PC-9 (cell line): ENCODE measurements at regions of chr13 and their contacts with region 1.

Region 1: DNA sequence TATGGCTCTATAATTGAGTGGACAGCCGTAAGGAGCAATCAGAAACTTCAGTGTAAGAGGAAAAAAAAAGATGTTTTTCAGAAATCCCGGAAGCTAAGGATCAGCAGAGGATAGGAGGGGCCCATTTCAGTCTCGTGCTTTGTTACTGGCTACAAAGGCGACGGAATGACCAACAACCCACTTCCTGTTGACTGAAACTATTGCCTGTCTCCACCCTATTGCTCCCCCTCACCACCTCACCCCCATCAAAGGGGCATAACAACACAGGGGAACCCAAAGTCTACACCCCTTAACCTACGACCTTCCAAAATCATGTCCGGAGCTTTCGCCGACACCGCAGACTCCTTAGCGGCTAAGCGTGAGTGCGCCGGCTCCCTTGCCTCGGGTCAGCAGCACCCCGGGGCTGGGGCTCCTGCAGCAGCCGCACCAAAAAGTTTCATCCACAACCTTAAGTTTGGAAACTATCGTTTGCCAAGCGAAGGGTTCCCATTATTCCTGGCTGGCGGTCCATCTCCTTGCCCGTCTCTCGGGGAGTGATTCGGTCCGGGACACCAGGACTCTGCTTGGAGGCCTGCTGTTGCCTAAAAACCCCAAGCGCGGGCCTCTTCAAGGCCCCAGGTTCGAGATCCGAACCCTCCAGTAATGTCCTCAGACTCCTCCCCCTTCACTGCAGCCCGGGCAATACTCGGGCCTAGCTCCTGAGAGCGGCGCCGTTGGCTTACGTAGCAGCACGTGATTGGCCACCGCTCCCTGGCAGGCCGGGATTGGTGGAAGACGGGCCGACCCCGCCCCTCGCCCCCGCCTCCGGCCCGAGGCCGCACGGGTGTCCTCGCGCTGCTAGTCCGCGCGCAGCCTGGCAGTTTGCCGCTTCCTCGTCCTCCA is at the start of gene TPP2:
- DNase-seq: peak; percentile 96 to 99
- H3K4me3 ChIP-seq: peak within 1 kb of the TSS; percentile 93
- H3K27ac ChIP-seq: peak within 1 kb of the TSS; percentile 95
- H3K4me1 ChIP-seq: peaks cover 35% of the 10 kb centered on the region
- H3K27me3 ChIP-seq: no peaks in the 10 kb centered on the region
- CTCF ChIP-seq: no peak
- total RNA-seq, gene TPP2: 33.3 and 35.1 TPM in 2 replicates

Region 2: GRCh38 chr13:102510072-102510471 is 86.3 kb before region 1 on chr13:
- CTCF ChIA-PET with region 1: no interaction called
- POLR2A ChIA-PET with region 1: no interaction called
- intact Hi-C with region 1: no loop called
- DNase-seq: no peak
- H3K4me3 ChIP-seq: no peak overlapping the region
- H3K27ac ChIP-seq: no peak overlapping the region
- H3K4me1 ChIP-seq: no peaks in the 10 kb centered on the region
- H3K27me3 ChIP-seq: no peaks in the 10 kb centered on the region
- CTCF ChIP-seq: no peak

Region 3: GRCh38 chr13:102571075-102571474 is 25.3 kb before region 1 on chr13:
- CTCF ChIA-PET with region 1: no interaction called
- POLR2A ChIA-PET with region 1: no interaction called
- intact Hi-C with region 1: no loop called
- DNase-seq: no peak
- H3K4me3 ChIP-seq: no peak overlapping the region
- H3K27ac ChIP-seq: no peak overlapping the region
- H3K4me1 ChIP-seq: no peaks in the 10 kb centered on the region
- H3K27me3 ChIP-seq: peaks cover 83% of the 10 kb centered on the region
- CTCF ChIP-seq: peak; percentile 44

Region 4: DNA sequence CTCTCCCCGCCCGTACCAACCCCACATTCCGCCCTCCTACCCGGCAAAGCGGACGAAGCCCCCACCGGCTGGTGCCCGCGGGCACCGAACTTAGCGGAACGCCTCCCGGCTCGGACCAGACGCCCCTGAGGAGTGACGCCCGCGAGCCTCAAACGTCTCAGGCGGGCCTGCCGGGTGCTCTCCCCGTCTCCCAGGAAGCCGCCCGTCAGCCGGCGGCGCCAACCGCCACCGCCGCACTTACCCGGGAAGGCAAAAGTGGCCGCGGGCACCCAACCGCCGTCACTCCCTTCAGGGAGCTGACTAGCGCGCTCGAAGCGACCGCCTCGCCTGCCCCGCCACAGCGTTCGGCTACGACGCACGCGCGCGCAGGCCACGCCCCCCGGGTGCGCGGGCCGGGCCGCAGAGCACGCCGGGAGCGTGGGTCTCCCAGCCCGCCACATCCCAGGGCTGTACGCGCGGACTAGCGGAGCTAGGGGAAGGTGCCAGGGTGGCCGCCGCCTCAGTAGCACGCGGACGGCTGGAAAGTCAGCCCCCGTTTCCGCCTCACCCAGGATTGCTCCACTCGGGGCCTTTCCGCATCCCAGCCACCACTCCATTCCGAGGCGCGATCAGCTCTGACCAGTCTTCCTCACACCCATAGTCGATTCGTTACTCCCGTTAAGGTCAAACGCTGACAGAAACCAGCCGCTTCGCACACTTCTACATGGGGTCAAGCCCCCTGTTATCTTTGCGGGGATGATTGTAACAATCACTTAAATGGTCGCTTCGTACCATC is 177.2 kb after region 1 on chr13 and contains the start of gene TEX30:
- CTCF ChIA-PET with region 1: no interaction called
- POLR2A ChIA-PET with region 1: interaction called, 5 read pairs
- intact Hi-C with region 1: loop called (anchors 5 kb)
- DNase-seq: peak; percentile 64 to 88
- H3K4me3 ChIP-seq: peak within 1 kb of the TSS; percentile 84
- H3K27ac ChIP-seq: 0 out of 2 replicates have a peak within 1 kb of the TSS, but pooled peaks have one; percentile 4
- H3K4me1 ChIP-seq: peaks cover 11% of the 10 kb centered on the region
- H3K27me3 ChIP-seq: no peaks in the 10 kb centered on the region
- CTCF ChIP-seq: no peak
- total RNA-seq, gene TEX30: 9.3 and 13.1 TPM in 2 replicates

Region 5: GRCh38 chr13:102793583-102794355 is 197.4 kb after region 1 on chr13:
- CTCF ChIA-PET with region 1: no interaction called
- POLR2A ChIA-PET with region 1: no interaction called
- intact Hi-C with region 1: no loop called
- DNase-seq: no peak
- H3K4me3 ChIP-seq: no peak overlapping the region
- H3K27ac ChIP-seq: no peak overlapping the region
- H3K4me1 ChIP-seq: peaks cover 9% of the 10 kb centered on the region; the same call in 1 of the 2 replicates
- H3K27me3 ChIP-seq: no peaks in the 10 kb centered on the region
- CTCF ChIP-seq: no peak

Region 6: DNA sequence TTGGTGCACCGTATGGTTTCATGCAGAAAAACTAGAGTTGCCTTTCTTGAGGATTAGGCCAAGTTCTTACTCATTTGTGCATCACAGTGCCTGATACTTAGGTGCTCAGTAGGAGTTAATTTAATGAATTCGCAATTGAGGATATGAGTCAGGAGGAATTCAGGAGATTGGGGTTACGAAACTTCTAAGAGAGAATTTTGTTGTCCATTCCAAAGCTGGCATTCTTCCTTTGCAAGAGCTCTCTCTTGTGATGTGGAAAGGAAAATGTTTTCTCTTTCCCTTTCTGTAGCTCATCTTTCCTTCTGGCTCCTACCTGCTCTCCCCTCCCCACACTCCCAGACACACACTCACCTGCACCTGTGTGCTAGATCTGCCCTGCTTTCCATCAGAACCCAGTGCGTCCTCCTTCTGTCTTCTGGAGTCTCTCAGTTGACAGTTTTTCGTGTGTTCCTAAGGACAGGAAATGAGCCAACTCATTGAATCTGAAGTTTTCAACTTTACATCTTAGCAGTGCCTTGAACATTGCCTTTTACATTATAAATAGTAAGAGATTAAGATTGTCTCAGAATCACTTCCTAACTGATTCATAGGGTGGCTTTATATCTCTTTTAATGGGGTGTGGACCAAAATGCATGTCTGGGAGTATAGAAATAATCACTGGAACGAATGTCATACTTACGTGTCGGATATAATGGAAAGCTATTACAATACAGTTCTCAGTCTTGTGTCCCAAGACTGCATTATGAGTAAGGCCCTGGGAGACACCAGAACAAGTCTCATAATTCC is 229.7 kb after region 1 on chr13:
- CTCF ChIA-PET with region 1: no interaction called
- POLR2A ChIA-PET with region 1: interaction called, 3 read pairs
- intact Hi-C with region 1: loop called (anchors 1 kb)
- DNase-seq: peak; percentile 5 to 86
- H3K4me3 ChIP-seq: peak overlapping the region; percentile 2; the same call in 1 of the 2 replicates
- H3K27ac ChIP-seq: peak overlapping the region; percentile 59
- H3K4me1 ChIP-seq: peaks cover 17% of the 10 kb centered on the region
- H3K27me3 ChIP-seq: no peaks in the 10 kb centered on the region
- CTCF ChIP-seq: no peak; the same call in 1 of the 2 replicates